Mammary epithelial cell (primary cell): ENCODE measurements at regions of chr16 and their contacts with region 1.

Region 1: DNA sequence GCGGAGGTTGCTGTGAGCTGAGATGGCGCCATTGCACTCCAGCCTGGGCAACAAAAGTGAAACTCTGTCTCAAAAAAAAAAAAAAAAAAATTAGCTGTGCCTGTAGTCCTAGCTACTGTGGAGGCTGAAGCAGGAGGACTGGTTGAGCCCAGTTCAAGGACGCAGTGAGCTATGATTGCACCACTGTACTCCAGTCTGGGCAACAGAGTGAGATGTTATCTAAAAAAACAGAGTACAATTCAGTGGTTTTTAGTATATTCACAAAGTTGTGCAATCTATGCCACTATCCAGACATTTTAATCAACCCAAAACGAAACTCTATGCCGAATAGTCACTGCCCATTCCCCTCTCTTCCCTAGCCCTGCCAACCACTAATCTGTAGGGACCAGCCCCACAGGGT is 25.1 kb downstream of the C16orf54 start:
- DNase-seq: no peak
- H3K4me3 ChIP-seq: no peak overlapping the region
- H3K27ac ChIP-seq: no peak overlapping the region
- H3K4me1 ChIP-seq: peaks cover 4% of the 10 kb centered on the region
- H3K27me3 ChIP-seq: no peaks in the 10 kb centered on the region
- CTCF ChIP-seq: no peak

Region 2: GRCh38 chr16:29645694-29646187 is 75.0 kb before region 1 on chr16:
- CTCF ChIA-PET with region 1: no interaction called
- dilution Hi-C with region 1: no loop called
- in situ Hi-C with region 1: no loop called
- intact Hi-C with region 1: no loop called
- DNase-seq: no peak
- H3K4me3 ChIP-seq: no peak overlapping the region
- H3K27ac ChIP-seq: no peak overlapping the region
- H3K4me1 ChIP-seq: no peaks in the 10 kb centered on the region
- H3K27me3 ChIP-seq: no peaks in the 10 kb centered on the region
- CTCF ChIP-seq: no peak

Region 3: DNA sequence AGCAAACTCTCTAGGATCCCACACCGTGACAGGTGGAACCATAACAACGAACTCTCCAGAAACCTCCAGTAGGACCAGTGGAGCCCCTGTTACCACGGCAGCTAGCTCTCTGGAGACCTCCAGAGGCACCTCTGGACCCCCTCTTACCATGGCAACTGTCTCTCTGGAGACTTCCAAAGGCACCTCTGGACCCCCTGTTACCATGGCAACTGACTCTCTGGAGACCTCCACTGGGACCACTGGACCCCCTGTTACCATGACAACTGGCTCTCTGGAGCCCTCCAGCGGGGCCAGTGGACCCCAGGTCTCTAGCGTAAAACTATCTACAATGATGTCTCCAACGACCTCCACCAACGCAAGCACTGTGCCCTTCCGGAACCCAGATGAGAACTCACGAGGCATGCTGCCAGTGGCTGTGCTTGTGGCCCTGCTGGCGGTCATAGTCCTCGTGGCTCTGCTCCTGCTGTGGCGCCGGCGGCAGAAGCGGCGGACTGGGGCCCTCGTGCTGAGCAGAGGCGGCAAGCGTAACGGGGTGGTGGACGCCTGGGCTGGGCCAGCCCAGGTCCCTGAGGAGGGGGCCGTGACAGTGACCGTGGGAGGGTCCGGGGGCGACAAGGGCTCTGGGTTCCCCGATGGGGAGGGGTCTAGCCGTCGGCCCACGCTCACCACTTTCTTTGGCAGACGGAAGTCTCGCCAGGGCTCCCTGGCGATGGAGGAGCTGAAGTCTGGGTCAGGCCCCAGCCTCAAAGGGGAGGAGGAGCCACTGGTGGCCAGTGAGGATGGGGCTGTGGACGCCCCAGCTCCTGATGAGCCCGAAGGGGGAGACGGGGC is 56.4 kb before region 1 on chr16:
- CTCF ChIA-PET with region 1: no interaction called
- dilution Hi-C with region 1: loop called (anchors 5 kb)
- in situ Hi-C with region 1: no loop called
- intact Hi-C with region 1: no loop called
- DNase-seq: no peak
- H3K4me3 ChIP-seq: no peak overlapping the region
- H3K27ac ChIP-seq: no peak overlapping the region
- H3K4me1 ChIP-seq: no peaks in the 10 kb centered on the region
- H3K27me3 ChIP-seq: no peaks in the 10 kb centered on the region
- CTCF ChIP-seq: no peak

Region 4: DNA sequence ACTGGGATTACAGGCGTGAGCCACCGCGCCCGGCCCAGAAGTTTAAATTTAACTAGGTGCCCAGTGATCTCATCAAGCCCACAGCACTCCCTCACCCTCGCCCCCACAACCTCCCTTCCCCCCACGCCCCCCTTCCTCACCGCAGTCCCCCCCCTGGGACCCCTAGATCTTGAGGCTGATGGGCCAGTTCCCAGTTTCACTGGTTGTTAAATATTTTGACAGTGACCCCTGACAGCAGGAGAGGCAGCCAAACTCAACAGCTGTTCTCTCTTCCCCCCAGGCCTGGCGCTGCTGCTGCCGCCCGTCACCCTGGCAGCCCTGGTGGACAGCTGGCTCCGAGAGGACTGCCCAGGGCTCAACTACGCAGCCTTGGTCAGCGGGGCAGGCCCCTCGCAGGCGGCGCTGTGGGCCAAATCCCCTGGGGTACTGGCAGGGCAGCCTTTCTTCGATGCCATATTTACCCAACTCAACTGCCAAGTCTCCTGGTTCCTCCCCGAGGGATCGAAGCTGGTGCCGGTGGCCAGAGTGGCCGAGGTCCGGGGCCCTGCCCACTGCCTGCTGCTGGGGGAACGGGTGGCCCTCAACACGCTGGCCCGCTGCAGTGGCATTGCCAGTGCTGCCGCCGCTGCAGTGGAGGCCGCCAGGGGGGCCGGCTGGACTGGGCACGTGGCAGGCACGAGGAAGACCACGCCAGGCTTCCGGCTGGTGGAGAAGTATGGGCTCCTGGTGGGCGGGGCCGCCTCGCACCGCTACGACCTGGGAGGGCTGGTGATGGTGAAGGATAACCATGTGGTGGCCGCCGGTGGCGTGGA is 26.1 kb before region 1 on chr16:
- CTCF ChIA-PET with region 1: interaction called, 23 read pairs
- dilution Hi-C with region 1: no loop called
- in situ Hi-C with region 1: no loop called
- intact Hi-C with region 1: no loop called
- DNase-seq: no peak
- H3K4me3 ChIP-seq: no peak overlapping the region
- H3K27ac ChIP-seq: no peak overlapping the region
- H3K4me1 ChIP-seq: no peaks in the 10 kb centered on the region
- H3K27me3 ChIP-seq: no peaks in the 10 kb centered on the region
- CTCF ChIP-seq: no peak

Region 5: DNA sequence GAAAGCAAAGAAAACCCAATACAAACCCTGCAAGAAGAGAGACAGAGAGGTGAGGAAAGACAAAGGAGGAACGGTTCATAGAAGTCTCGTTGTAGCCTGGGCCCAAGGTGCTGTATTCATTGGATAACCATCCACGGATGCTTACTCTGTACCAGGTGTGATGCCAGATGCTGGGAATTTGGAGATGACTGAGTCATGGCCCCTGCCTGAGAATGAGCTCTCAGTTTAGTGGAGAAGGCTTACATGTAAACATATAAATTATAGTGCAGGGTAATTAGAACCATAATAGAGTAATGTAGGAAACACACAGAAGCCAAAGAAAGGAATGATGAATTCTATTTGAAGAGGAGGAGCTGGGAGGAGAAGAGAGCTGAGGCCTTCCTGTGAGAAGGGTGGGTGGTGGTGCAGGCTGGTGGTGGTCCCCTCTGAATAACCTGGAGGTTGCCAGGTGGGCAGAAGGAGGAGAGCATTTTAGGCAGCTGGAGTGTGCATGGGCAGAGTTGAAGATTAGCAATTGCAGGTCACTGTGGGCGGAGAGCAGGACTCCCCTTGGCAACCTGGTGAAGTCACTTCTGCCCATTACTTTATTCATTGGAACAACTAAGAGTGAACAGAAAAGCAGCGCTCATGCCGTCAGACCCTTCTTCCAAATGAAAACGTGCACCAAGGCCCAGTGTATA is 49.7 kb after region 1 on chr16:
- CTCF ChIA-PET with region 1: no interaction called
- dilution Hi-C with region 1: loop called (anchors 5 kb)
- in situ Hi-C with region 1: no loop called
- intact Hi-C with region 1: no loop called
- DNase-seq: no peak
- H3K4me3 ChIP-seq: no peak overlapping the region
- H3K27ac ChIP-seq: no peak overlapping the region
- H3K4me1 ChIP-seq: no peaks in the 10 kb centered on the region
- H3K27me3 ChIP-seq: no peaks in the 10 kb centered on the region
- CTCF ChIP-seq: no peak

Region 6: GRCh38 chr16:29857133-29857760 is 136.5 kb after region 1 on chr16:
- CTCF ChIA-PET with region 1: no interaction called
- dilution Hi-C with region 1: no loop called
- in situ Hi-C with region 1: no loop called
- intact Hi-C with region 1: no loop called
- DNase-seq: no peak
- H3K4me3 ChIP-seq: no peak overlapping the region
- H3K27ac ChIP-seq: no peak overlapping the region
- H3K4me1 ChIP-seq: peaks cover 3% of the 10 kb centered on the region
- H3K27me3 ChIP-seq: no peaks in the 10 kb centered on the region
- CTCF ChIP-seq: no peak